ENCODE measurements at regions of chr22 and their contacts with region 1.

Region 1: GRCh38 chr22:31148953-31149627 is 8.8 kb upstream of the PLA2G3 start:
- DNase-seq: peak in 9 of 10 donors; percentile 52 to 95 (median 72)

Region 2: GRCh38 chr22:30876915-30877553 is 272.1 kb before region 1 on chr22:
- intact Hi-C with region 1: no loop called
- DNase-seq: peak; percentile 42 to 95 (median 72)

Region 3: GRCh38 chr22:30979932-30980331 is 169.2 kb before region 1 on chr22:
- intact Hi-C with region 1: no loop called
- DNase-seq: no peak

Region 4: GRCh38 chr22:30990690-30991089 is 158.4 kb before region 1 on chr22:
- intact Hi-C with region 1: no loop called
- DNase-seq: no peak

Region 5: DNA sequence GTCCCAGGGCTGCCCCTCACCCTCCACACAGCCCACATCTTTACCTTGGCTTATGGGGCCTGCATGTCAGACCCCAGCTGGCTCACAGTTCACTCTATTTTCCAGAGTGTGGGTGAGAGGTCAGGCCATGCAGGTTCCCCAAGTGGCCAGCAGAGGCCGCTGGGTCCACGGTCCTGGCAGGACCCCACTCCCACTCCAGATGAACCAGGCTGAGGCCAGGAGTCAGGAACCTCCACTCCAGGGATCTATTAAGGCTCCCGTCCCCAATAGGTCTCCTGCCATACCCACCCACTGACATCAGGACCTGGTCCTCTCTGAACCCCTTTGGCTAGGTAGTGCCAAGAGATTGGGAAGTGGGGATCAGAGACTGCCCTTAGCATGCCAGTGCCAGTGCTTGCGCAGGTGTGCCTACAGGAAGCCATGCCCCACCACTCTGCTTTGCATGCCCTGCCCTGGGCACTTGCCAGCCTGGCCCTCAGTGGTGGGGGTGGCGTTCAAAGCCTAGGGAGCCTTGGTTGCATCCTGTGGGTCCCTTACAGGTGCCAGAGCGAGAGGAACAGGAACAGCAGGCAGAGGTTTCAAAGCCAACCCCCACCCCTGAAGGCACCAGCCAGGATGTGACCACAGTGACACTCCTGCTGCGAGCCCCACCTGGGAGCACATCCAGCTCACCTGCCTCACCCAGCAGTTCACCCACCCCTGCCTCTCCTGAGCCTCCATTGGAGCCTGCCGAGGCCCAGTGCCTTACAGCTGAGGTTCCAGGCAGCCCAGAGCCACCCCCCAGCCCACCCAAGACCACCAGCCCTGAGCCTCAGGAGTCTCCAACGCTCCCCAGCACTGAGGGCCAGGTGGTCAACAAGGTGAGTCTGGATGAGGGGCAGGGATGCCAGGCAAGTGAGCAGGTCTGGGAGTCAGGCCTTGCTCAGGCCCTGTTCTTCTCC is 59.7 kb before region 1 on chr22:
- intact Hi-C with region 1: loop called (anchors 2 kb)
- DNase-seq: peak in 6 of 10 donors; percentile 45 to 95 (median 66)

Region 6: DNA sequence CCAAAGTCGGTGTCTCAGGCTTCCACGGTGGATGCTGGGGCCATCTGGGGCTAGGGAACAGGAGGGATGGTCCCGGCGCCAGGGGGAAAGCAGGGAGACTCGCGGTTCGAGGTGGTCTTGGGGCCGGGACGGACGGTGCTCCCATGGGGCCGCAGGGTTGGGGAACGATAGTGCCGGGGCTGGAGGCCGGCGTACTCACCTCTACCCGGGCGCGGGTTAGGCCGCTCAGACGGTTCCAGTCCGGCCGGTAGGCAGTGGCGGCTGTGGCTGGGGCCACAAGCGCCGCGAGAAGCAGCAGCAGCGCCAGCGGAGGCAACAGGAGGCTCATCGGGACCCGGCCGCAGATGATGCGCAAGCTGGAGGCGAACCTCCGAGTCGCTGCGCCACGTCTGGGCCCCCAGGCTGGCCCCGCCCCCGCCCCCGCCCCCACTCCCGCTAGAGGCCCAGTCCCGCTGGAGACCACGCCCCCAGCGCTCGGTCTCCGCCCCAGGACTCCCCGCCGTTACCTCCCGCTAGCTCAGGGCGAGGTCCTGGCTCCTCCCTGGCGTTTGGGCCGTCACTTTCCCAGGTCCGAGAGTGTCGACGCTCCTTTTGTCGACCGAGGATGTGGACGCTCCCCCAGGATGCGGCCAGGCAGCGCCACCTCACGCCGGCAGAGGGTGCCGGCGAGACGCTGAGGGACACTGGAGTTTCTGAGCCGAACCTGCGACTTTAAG is 41.8 kb before region 1 on chr22 and contains the start of gene SELENOM:
- intact Hi-C with region 1: loop called (anchors 5 kb)
- DNase-seq: peak; percentile 82 to 99 (median 94)